ENCODE measurements at regions of chr14 and their contacts with region 1.

Region 1: GRCh38 chr14:69673578-69674305 is 62.3 kb downstream of the SUSD6 start:
- DNase-seq: no peak
- H3K4me3 Mint-ChIP-seq: peak overlapping the region; percentile 55
- H3K27ac Mint-ChIP-seq: peak overlapping the region; percentile 97
- H3K4me1 Mint-ChIP-seq: peaks cover 74% of the 10 kb centered on the region
- H3K27me3 Mint-ChIP-seq: no peaks in the 10 kb centered on the region

Region 2: DNA sequence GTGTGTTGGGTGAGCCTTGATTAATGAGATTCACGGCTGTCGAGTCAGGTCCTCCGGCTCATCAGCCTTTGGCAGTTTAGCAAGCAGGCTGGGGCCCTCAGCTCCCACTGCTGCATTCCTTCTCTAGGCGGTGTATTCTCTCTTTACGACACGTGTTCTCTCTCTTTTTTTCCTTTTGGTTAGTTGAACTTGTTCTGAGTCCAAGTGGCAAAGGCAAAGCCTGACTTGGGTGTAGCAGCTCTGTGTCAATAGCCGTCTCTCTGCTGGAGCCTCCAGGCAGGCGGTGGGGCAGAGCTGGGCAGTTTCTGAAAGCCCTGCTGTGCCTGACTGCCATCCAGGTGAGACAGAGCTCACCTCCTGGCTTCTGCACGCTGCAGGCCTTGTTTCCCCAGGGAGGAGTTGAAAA is 15.8 kb before region 1 on chr14:
- intact Hi-C with region 1: loop called (anchors 2 kb)
- DNase-seq: no peak
- H3K4me3 Mint-ChIP-seq: no peak overlapping the region
- H3K27ac Mint-ChIP-seq: peak overlapping the region; percentile 44
- H3K4me1 Mint-ChIP-seq: peaks cover 72% of the 10 kb centered on the region
- H3K27me3 Mint-ChIP-seq: no peaks in the 10 kb centered on the region